ENCODE measurements at regions of chr3 and their contacts with region 1.

Region 1: DNA sequence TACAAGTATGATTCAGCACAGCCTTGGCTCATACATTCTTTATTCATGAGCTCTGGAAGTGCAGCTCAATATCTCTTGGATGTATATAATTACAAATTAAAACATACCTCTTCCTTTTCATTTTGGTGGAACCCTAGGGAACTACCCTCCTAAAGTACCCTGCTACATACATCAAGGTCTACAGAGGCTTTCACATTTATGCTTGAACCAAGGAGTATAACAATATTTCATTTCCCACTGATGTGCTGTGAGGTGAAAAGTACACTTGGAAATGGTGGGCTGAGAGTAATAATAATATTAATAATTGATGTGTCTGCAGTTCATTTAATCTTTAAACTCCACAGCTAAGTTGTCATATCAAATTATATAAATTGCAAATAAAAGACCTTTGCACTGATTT is 142.2 kb upstream of the LRRC3B start:
- DNase-seq: no peak
- H3K4me3 ChIP-seq: no peak overlapping the region
- H3K27ac ChIP-seq: no peak overlapping the region
- H3K4me1 ChIP-seq: no peaks in the 10 kb centered on the region
- H3K27me3 ChIP-seq: no peaks in the 10 kb centered on the region

Region 2: GRCh38 chr3:26522919-26523318 is 42.5 kb after region 1 on chr3:
- CTCF ChIA-PET with region 1: no interaction called
- POLR2A ChIA-PET with region 1: no interaction called
- DNase-seq: no peak
- H3K4me3 ChIP-seq: no peak overlapping the region
- H3K27ac ChIP-seq: no peak overlapping the region
- H3K4me1 ChIP-seq: no peaks in the 10 kb centered on the region
- H3K27me3 ChIP-seq: no peaks in the 10 kb centered on the region

Region 3: DNA sequence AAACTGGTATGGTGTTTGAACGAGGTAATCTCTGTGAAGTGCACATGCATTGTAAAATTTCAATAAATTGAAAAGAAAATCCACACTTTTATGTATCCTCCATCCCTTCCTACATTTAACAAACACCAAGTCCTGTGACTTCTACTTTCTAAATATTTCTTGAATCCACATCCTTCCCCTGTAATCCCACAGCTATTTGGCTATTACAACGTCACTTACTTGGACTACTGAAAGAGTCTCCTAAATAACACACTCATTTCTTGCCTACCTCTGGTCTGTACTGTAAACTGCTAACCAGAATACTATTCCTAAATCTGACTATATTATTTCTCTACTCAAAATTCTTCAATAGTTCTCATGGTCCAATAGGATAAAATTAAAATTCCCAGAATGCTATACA is 712.7 kb after region 1 on chr3:
- CTCF ChIA-PET with region 1: no interaction called
- POLR2A ChIA-PET with region 1: interaction called, 13 read pairs
- DNase-seq: no peak
- H3K4me3 ChIP-seq: no peak overlapping the region
- H3K27ac ChIP-seq: no peak overlapping the region
- H3K4me1 ChIP-seq: no peaks in the 10 kb centered on the region
- H3K27me3 ChIP-seq: no peaks in the 10 kb centered on the region